Activated naive CD4-positive, alpha-beta T cell treated with anti-CD3 and anti-CD28 coated beads for 36 hours (primary cell): ENCODE measurements at regions of chr4 and their contacts with region 1.

Region 1: DNA sequence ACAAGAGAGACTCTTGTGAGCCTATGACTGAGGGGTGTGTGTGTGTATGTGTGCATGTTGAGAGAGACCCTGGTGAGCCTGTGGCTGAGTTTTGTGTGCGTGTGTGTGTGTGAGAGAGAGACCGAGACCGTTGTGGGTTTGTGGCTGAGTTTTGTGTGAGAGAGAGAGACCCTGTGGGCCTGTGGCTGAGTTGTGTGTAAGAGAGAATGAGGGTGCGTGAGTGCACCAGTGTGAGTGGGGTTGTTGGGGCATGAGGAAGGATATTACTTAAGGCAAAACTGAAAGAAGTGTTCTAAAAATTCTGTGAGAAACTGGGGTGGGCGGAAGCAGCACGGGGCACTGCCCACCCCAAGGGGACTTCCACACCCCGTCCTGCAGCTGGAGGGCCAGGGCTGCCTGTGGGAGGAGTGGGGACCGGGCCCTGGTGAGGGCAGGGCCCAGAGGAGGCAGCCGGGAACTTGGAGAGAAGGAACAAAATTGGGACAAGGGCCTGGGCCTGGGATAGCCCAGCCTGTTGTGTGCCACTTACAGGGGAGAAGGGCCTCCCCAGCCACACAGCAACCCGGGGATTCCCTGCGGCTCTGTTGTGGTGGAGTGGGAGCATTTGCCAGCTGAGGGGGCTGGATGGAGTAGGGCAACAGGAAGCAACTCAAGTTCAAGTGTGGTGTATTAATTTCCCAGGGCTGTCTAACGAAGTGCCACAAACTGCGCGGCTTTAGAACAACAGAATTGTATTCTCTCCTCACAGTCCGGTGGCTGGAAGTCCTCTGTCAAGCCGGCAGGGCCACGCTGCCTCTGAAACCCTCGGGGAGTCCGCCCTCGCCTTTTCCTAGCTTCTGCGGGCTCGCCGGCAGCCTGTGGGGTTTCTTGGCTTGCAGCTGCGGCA is 22.1 kb downstream of the TMEM131L start:
- DNase-seq: peak; percentile 86
- H3K4me3 Mint-ChIP-seq: peak overlapping the region; percentile 69
- H3K27ac Mint-ChIP-seq: peak overlapping the region; percentile 95
- H3K4me1 Mint-ChIP-seq: peaks cover 81% of the 10 kb centered on the region
- H3K27me3 Mint-ChIP-seq: no peaks in the 10 kb centered on the region

Region 2: DNA sequence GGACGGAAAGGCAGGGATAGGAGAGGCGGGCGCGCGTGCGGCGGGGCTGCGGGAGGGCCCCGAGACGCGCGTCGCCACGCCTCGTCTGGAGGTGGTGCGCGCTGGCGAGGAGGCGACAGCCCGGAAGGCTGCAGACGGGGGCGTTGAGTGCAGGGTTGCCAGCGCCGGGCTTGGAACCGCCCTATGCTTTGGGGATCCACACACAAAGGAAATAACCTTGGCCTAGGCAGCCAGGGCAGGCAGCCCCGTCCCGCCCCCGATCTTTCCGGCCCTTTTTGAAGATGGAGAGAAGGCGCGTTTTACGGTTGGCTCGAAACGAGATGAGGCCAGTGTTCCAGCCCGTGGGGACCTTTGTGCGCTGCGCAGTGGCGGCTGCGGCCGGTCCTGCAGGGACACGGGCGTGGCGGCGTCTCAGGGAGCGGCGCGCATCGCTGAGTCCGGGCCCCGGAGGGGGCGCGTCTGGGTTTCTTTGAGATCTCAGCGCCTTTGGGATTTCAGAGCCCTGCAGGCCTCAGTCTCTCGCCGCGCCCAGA is 334.8 kb before region 1 on chr4:
- CTCF ChIA-PET with region 1: no interaction called
- intact Hi-C with region 1: loop called (anchors 5 kb)
- DNase-seq: peak; percentile 91
- H3K4me3 Mint-ChIP-seq: peak overlapping the region; percentile 80
- H3K27ac Mint-ChIP-seq: peak overlapping the region; percentile 86
- H3K4me1 Mint-ChIP-seq: peaks cover 58% of the 10 kb centered on the region
- H3K27me3 Mint-ChIP-seq: no peaks in the 10 kb centered on the region

Region 3: DNA sequence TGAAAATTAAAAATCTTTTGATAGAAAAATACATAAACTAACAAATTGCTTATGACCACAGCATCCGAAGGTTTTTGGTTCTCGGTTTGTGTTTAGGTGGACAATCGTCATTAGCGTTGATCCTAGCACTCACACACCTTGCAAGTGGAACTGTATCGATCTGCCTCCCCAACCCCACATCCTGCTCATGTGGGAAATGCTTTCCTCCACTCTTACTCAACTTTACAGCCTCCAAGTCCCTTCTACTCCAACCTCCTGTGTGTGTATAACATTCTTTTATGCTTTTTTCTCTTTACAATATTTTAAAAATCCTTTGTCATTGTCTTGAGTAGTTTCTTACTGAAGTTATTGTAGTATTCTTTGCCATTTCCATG is 37.7 kb before region 1 on chr4:
- CTCF ChIA-PET with region 1: interaction called, 4 read pairs
- intact Hi-C with region 1: loop called (anchors 1 kb)
- DNase-seq: peak; percentile 42
- H3K4me3 Mint-ChIP-seq: peak overlapping the region; percentile 36
- H3K27ac Mint-ChIP-seq: peak overlapping the region; percentile 90
- H3K4me1 Mint-ChIP-seq: peaks cover 25% of the 10 kb centered on the region
- H3K27me3 Mint-ChIP-seq: no peaks in the 10 kb centered on the region

Region 4: GRCh38 chr4:153497988-153498967 is 10.0 kb after region 1 on chr4:
- CTCF ChIA-PET with region 1: interaction called, 20 read pairs
- intact Hi-C with region 1: loop called (anchors 1 kb)
- DNase-seq: peak; percentile 33
- H3K4me3 Mint-ChIP-seq: peak overlapping the region; percentile 70
- H3K27ac Mint-ChIP-seq: peak overlapping the region; percentile 98
- H3K4me1 Mint-ChIP-seq: peaks cover 91% of the 10 kb centered on the region
- H3K27me3 Mint-ChIP-seq: no peaks in the 10 kb centered on the region

Region 5: DNA sequence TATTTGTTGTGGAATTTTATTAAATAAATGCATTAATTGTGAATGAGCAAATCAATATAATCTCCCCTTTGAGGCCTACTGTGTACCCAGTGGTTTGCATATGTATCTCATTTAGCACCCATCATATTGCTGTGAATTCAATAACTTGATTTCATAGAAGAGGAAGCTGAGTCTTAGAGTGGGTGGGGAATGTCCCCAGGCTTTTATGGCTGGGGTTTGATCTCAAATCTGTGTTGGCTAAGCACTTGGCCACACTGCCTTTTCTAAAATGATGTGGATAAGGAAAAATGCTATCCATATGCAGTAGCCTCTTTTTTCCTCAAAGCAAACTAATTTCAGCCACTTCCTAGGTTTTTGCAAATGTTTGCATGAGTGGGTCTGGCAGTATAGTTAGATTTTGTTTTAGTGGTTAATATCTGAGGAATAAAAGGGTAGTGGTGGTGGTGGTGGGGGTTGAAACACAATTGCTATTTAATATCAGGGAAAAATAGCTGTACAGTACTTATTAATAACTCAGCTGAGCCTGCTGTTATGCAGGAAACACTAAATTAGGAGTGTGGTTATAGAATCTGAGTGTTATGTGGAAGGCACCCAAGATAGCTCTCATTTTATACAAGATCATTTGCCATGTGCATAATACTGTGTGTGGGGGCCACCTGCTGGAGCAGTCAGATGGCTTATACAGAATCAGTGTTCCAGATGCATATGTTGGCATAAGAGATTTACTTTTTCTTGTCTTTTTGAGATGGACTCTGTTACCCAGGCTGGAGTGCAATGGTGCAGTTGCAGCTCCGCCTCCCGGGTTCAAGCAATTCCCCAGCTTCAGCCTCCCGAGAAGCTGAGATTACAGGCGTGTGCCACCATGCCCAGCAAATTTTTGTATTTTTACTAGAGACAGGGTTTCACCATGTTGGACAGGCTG is 85.9 kb after region 1 on chr4:
- CTCF ChIA-PET with region 1: interaction called, 8 read pairs
- intact Hi-C with region 1: loop called (anchors 1 kb)
- DNase-seq: peak; percentile 78
- H3K4me3 Mint-ChIP-seq: no peak overlapping the region
- H3K27ac Mint-ChIP-seq: peak overlapping the region; percentile 74
- H3K4me1 Mint-ChIP-seq: peaks cover 76% of the 10 kb centered on the region
- H3K27me3 Mint-ChIP-seq: no peaks in the 10 kb centered on the region